Tibial artery (tissue), 4 donors: ENCODE measurements at regions of chr7 and their contacts with region 1.

Region 1: DNA sequence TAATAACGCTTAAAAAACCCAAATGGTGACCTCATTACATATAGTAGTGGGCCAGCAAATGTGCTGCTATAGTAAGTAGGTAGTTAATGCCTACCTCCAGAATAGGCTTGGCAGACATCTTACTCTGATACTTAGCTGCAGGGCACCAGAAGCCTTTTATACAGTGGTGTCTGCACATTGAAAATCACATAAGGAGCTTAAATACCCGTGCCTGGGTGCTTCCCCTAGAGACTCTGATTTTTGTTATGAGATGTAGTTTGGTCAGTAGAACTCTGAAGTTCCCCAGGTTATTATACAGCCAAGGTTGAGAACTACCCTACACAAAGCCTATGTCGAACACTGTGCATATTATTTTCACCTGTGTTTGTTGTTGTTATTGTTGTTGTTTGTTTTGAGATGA is 47.2 kb downstream of the ANKIB1 start:
- DNase-seq: no peak
- H3K4me3 ChIP-seq: no peak overlapping the region
- H3K27ac ChIP-seq: no peak overlapping the region
- H3K4me1 ChIP-seq: peaks cover 0 to 32% (median 2%) of the 10 kb centered on the region in 4 donors
- H3K27me3 ChIP-seq: no peaks in the 10 kb centered on the region
- CTCF ChIP-seq: no peak

Region 2: DNA sequence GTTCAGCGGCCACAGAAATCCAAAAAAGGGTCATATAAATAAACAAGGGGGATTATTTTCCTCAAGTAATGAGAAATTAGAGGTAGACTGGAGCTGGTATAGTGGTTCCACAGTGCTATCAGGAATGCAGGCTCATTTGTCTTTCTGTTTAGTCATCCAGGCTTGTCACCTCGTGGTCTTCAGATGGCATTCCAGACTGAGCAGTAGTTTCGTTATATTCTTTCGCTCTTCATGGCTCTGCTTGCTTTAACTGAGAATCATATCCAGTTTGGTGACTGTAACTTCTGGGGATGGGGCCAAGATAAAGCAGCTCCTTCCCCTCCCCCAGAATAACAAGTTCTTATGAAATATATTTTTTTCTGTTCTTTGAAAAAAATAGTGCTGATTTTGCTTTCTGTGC is 37.7 kb before region 1 on chr7:
- intact Hi-C with region 1: loop called (anchors 5 kb)
- DNase-seq: peak; percentile 43 to 69
- H3K4me3 ChIP-seq: peak overlapping the region; percentile 18 to 34
- H3K27ac ChIP-seq: peak overlapping the region; percentile 66
- H3K4me1 ChIP-seq: peaks cover 0 to 26% (median 11%) of the 10 kb centered on the region in 4 donors
- H3K27me3 ChIP-seq: no peaks in the 10 kb centered on the region
- CTCF ChIP-seq: no peak